Activated CD4-positive, alpha-beta T cell treated with anti-CD3 and anti-CD28 coated beads, Interleukin-2, amount 10 ng/mL, durations not matched to agents 24 days and 14 days (primary cell): ENCODE measurements at regions of chr14 and their contacts with region 1.

Region 1: GRCh38 chr14:29536886-29537511 is 390.6 kb downstream of the PRKD1 start:
- DNase-seq: no peak
- H3K4me3 Mint-ChIP-seq: no peak overlapping the region
- H3K27ac Mint-ChIP-seq: no peak overlapping the region
- H3K4me1 Mint-ChIP-seq: no peaks in the 10 kb centered on the region
- H3K27me3 Mint-ChIP-seq: no peaks in the 10 kb centered on the region

Region 2: DNA sequence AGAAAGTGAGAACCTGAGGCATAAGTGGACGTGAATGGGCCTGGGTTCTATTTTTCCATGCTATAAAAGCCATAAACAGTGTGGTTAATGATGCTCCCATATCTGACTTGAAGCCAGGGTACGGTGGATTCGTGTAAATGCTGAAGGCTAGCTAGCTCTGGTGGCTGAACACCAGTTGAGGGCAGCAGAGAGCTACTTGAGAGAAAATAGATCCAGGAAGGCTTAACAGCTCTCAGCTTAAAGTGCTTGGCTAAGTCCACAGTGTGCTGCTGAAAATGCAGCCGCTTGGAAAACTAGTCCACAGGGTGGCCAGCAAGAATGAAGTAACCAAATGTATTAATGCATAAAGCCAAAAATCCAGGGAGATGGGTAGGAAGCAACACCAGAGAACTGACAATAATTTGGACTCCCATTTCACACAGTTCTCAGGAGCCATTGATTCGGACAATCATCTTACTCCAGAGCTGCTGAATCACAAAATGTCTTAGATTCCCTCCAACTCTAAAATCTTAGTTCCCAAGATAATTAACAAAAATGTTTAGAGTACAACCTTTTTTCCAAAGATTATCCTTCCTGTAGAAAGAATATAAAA is 785.4 kb before region 1 on chr14:
- intact Hi-C with region 1: loop called (anchors 10 kb)
- DNase-seq: peak; percentile 64
- H3K4me3 Mint-ChIP-seq: no peak overlapping the region
- H3K27ac Mint-ChIP-seq: no peak overlapping the region
- H3K4me1 Mint-ChIP-seq: no peaks in the 10 kb centered on the region
- H3K27me3 Mint-ChIP-seq: peaks cover 19% of the 10 kb centered on the region

Region 3: DNA sequence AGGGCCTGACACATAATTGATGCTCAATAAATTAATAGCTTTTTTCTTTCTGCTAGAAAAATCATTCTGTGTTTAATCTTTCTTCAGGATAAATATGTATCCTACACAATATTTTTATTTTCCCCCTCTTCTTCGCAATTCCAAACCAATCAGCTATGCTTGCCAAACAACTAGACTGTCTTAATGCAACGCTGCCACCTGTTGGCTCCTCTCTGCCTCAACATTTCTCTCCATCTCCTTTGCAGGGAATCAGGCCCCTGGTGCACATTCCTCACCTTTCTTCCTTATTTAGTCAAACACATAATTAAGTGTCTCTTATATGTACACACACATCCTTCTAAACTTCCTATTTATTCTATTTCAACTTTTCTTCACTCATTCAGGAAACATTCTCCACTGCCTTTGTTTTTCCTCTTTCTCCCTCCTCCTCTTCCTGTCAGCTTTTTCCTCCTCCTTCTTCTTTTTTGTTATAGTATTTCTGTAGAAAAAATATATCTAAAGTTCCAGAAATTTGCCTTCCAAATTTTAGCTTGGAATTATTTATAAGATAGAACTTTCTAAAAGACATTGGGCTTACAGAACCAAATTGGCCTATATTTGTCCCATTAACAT is 15.4 kb before region 1 on chr14:
- intact Hi-C with region 1: no loop called
- DNase-seq: no peak
- H3K4me3 Mint-ChIP-seq: no peak overlapping the region
- H3K27ac Mint-ChIP-seq: no peak overlapping the region
- H3K4me1 Mint-ChIP-seq: no peaks in the 10 kb centered on the region
- H3K27me3 Mint-ChIP-seq: no peaks in the 10 kb centered on the region